ENCODE measurements at regions of chr20 and their contacts with region 1.

Region 1: DNA sequence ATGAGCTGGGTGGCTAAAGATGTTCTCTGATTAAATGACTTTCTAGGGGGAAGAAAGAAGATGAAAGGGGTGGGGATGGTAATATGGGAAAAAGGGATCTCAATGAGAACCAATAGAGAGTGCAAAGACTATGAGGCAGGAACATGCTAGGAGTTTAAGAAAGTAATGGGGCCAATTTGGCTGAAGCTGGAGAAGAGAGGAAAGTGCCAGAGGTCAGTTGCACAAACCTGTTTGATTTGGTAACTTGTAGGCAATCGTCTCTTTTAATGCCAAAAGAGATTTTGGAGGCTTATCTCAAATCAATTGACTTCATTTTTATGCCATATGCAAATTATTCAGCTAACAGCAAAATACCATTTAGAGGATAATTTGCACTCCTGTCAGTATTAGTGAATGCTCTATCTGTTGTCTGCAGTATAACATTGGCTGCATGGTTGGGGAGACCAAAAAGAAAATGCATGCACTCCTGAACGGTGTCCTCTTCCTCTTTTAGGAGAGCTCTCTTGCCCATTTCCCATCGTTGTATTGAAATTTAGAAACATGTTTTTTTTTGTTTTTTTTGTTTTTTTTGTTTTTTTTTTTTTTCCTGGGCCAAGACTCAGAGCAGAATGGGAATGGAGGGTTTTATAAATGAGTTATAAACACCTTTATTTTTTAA is 193.9 kb downstream of the BTBD3 start:
- DNase-seq: no peak
- H3K4me3 ChIP-seq: no peak overlapping the region
- H3K27me3 ChIP-seq: no peaks in the 10 kb centered on the region
- CTCF ChIP-seq: no peak

Region 2: GRCh38 chr20:12987883-12988282 is 876.3 kb after region 1 on chr20:
- CTCF ChIA-PET with region 1: no interaction called
- POLR2A ChIA-PET with region 1: interaction called, 11 read pairs
- DNase-seq: no peak
- H3K4me3 ChIP-seq: no peak overlapping the region
- H3K27me3 ChIP-seq: no peaks in the 10 kb centered on the region; the same call in 1 of the 2 replicates
- CTCF ChIP-seq: no peak

Measured in BJ (cell line).